ENCODE measurements at regions of chr1 and their contacts with region 1.

Region 1: DNA sequence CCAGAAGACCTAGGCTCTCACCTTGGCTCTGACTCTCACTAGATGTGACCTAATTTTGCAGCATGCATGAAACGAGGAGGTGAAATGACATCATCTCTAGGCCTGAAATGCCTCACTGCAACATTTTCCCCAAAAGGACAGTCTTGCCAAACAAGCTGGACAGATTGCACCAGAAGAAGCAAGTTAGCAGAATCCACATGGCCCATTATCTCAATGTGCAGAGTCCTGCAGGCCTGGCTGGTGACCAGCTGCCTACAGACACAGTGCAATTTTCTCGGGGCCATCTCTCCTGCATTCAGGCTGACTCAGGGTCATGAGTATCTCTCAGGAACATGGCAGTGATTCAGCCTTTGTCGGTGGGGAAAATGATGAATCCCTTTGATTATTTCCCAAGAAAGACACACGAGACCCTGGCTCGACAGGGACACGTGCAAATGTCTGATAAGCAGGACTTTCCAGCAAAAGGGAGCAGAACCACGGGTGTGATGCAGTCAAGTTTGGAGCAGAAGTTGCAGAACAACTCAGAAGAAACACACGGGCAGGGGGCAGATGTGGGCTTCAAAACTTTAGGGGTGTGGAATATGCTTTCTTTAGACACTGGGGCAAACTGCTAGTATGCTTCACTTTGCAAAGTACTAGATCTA is 38.7 kb downstream of the TRIM67 start:
- DNase-seq: no peak
- H3K4me3 ChIP-seq: no peak overlapping the region
- H3K27ac ChIP-seq: no peak overlapping the region
- H3K4me1 ChIP-seq: no peaks in the 10 kb centered on the region
- H3K27me3 ChIP-seq: peaks cover 0 to 20% of the 10 kb centered on the region in 2 donors
- CTCF ChIP-seq: no peak

Region 2: DNA sequence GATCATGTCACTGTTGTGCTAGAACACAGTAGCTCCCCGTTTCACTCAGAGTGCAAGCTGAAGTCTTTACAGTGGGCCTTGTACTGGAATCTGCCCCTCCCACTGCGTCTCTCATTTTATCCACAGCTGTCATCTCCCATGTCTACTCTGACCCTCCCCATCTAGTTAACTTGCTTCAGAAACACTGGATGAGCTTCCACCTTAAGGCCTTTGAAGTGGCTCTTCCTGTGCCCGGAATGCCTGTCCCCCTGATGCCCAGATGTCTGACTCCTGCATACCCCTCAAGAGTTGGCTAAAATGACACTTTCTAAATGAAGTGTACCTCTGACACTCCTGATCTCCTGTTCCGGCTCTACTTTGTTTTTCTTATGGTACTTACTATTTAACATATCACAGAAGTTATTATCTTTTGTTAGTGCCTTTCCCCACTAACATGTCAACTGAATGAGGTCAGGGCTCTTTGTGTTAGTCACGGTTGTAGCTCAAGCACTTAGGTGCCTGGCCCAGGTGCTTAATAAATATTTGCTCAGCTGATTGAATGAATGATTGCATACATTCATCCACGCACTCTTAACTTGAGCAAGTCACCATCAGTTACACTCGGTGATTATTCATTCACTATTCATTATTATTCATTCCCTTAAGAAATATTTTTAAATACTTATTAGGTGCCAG is 208.3 kb before region 1 on chr1:
- intact Hi-C with region 1: loop called (anchors 10 kb)
- DNase-seq: no peak
- H3K4me3 ChIP-seq: no peak overlapping the region
- H3K27ac ChIP-seq: no peak overlapping the region
- H3K4me1 ChIP-seq: no peaks in the 10 kb centered on the region
- H3K27me3 ChIP-seq: no peaks in the 10 kb centered on the region
- CTCF ChIP-seq: no peak